ENCODE measurements at regions of chr1 and their contacts with region 1.

Region 1: GRCh38 chr1:34742667-34743270 is 12.1 kb upstream of the GJB5 start:
- DNase-seq: peak; percentile 79
- H3K4me3 Mint-ChIP-seq: no peak overlapping the region
- H3K27ac Mint-ChIP-seq: no peak overlapping the region
- H3K4me1 Mint-ChIP-seq: no peaks in the 10 kb centered on the region
- H3K27me3 Mint-ChIP-seq: peaks cover 7% of the 10 kb centered on the region

Region 2: DNA sequence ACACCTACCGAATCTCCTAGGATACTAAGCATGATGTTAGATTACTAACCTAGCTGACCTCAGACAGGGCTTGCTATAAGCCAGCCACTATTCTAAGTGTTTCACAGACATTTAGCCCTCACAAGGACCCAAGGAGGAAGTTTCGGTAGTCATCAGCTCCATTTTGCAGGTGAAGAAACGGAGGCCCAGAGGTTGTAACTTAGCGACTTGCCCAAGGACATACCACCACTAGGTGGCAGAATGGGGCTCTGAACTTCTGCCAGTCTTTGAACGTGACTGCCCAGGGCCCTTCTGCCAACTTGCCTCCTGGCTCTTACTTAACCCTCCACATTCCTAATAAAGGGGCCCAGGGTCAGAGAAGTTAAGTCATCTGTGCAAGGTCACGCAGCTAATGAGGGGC is 282.6 kb before region 1 on chr1:
- CTCF ChIA-PET with region 1: interaction called, 24 read pairs
- POLR2A ChIA-PET with region 1: no interaction called
- DNase-seq: peak; percentile 52
- H3K4me3 Mint-ChIP-seq: no peak overlapping the region
- H3K27ac Mint-ChIP-seq: no peak overlapping the region
- H3K4me1 Mint-ChIP-seq: no peaks in the 10 kb centered on the region
- H3K27me3 Mint-ChIP-seq: no peaks in the 10 kb centered on the region

Region 3: GRCh38 chr1:34753163-34753562 is 10.4 kb after region 1 on chr1:
- CTCF ChIA-PET with region 1: interaction called, 18 read pairs
- POLR2A ChIA-PET with region 1: no interaction called
- DNase-seq: no peak
- H3K4me3 Mint-ChIP-seq: no peak overlapping the region
- H3K27ac Mint-ChIP-seq: no peak overlapping the region
- H3K4me1 Mint-ChIP-seq: no peaks in the 10 kb centered on the region
- H3K27me3 Mint-ChIP-seq: peaks cover 6% of the 10 kb centered on the region